Mammary epithelial cell (primary cell): ENCODE measurements at regions of chr3 and their contacts with region 1.

Region 1: GRCh38 chr3:197554562-197555280 is 1.0 kb downstream of the BDH1 start:
- DNase-seq: peak; percentile 95
- H3K4me3 ChIP-seq: peak overlapping the region; percentile 58 to 89 (median 71)
- H3K27ac ChIP-seq: peak overlapping the region; percentile 72
- H3K4me1 ChIP-seq: peaks cover 7% of the 10 kb centered on the region
- H3K27me3 ChIP-seq: no peaks in the 10 kb centered on the region
- CTCF ChIP-seq: peak; percentile 33 to 67

Region 2: GRCh38 chr3:197511130-197511529 is 43.6 kb before region 1 on chr3:
- CTCF ChIA-PET with region 1: no interaction called
- dilution Hi-C with region 1: loop called (anchors 5 kb)
- in situ Hi-C with region 1: no loop called
- intact Hi-C with region 1: loop called (anchors 2 kb)
- DNase-seq: peak; percentile 59
- H3K4me3 ChIP-seq: no peak overlapping the region
- H3K27ac ChIP-seq: no peak overlapping the region
- H3K4me1 ChIP-seq: peaks cover 30% of the 10 kb centered on the region
- H3K27me3 ChIP-seq: no peaks in the 10 kb centered on the region
- CTCF ChIP-seq: no peak

Region 3: GRCh38 chr3:197516517-197516889 is 38.2 kb before region 1 on chr3:
- CTCF ChIA-PET with region 1: no interaction called
- dilution Hi-C with region 1: loop called (anchors 5 kb)
- in situ Hi-C with region 1: no loop called
- intact Hi-C with region 1: loop called (anchors 2 kb)
- DNase-seq: peak; percentile 98
- H3K4me3 ChIP-seq: no peak overlapping the region
- H3K27ac ChIP-seq: peak overlapping the region; percentile 65
- H3K4me1 ChIP-seq: peaks cover 32% of the 10 kb centered on the region
- H3K27me3 ChIP-seq: no peaks in the 10 kb centered on the region
- CTCF ChIP-seq: no peak

Region 4: DNA sequence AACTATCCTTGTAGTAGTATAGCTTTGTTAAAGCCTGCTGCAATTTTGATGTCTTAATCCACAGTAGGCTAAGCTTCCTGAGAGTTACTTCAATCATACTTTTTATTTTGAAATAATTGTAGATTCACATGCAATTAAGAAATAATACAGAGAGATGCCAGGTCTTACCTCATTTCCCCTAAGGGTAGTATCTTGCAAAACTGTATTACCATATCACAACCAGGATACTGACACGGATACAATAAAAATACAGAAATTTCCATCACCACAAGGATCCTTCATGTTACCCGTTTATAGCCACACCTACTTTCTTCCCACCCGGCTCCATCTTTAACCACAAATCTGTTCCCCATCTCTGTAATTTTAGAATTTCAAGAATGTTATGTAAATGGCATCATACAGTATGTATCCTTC is 20.8 kb before region 1 on chr3:
- CTCF ChIA-PET with region 1: interaction called, 10 read pairs
- dilution Hi-C with region 1: no loop called
- in situ Hi-C with region 1: no loop called
- intact Hi-C with region 1: loop called (anchors 2 kb)
- DNase-seq: peak; percentile 69
- H3K4me3 ChIP-seq: no peak overlapping the region
- H3K27ac ChIP-seq: peak overlapping the region; percentile 46
- H3K4me1 ChIP-seq: peaks cover 20% of the 10 kb centered on the region
- H3K27me3 ChIP-seq: no peaks in the 10 kb centered on the region
- CTCF ChIP-seq: no peak

Region 5: DNA sequence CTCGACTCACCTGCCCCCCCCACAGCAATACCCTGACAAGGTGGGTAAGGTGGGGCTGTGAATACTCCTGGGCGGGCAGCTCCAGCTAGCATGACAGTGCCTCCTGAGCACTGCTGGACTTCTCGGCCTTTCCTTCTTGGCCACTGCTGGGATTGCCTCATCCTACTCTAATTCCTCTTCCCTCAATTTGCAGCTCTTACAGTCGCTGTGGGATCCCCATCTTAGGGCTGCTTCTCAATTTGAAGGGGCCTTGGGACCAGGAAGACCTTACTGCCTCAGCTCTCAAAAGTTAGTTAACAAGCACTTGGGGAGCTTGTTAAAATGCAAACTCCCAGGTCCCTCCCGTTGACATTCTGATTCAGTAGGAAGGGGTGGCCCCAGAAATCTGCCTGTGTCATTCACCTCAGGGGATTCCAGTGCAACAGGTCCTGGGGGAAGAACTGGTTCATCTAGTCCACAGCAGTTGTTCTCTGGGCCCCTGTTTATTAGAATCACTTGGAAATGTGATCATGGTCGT is 13.8 kb before region 1 on chr3:
- CTCF ChIA-PET with region 1: interaction called, 10 read pairs
- dilution Hi-C with region 1: no loop called
- in situ Hi-C with region 1: no loop called
- intact Hi-C with region 1: no loop called
- DNase-seq: peak; percentile 38
- H3K4me3 ChIP-seq: no peak overlapping the region
- H3K27ac ChIP-seq: no peak overlapping the region
- H3K4me1 ChIP-seq: peaks cover 12% of the 10 kb centered on the region
- H3K27me3 ChIP-seq: no peaks in the 10 kb centered on the region
- CTCF ChIP-seq: no peak

Region 6: DNA sequence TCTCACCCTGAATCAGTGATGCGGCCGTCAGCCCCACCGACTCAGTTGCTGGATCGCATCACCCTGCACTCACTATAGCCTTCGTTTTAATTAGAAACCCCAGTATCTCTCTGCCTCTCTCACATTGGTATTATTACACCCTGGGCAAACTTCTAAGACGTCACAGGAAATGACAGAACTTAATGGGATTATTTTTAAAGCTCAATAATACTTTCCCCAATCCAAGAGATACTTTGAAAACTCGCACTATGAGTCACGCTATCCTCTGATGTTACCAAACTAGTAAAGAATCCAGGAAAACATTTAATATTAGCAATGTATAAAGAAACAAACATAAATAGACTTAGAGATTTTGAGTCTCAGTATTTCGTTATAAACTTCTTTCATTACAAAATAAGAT is 145.4 kb after region 1 on chr3:
- CTCF ChIA-PET with region 1: no interaction called
- dilution Hi-C with region 1: no loop called
- in situ Hi-C with region 1: no loop called
- intact Hi-C with region 1: no loop called
- DNase-seq: no peak
- H3K4me3 ChIP-seq: no peak overlapping the region
- H3K27ac ChIP-seq: no peak overlapping the region
- H3K4me1 ChIP-seq: no peaks in the 10 kb centered on the region
- H3K27me3 ChIP-seq: no peaks in the 10 kb centered on the region
- CTCF ChIP-seq: no peak

Region 7: DNA sequence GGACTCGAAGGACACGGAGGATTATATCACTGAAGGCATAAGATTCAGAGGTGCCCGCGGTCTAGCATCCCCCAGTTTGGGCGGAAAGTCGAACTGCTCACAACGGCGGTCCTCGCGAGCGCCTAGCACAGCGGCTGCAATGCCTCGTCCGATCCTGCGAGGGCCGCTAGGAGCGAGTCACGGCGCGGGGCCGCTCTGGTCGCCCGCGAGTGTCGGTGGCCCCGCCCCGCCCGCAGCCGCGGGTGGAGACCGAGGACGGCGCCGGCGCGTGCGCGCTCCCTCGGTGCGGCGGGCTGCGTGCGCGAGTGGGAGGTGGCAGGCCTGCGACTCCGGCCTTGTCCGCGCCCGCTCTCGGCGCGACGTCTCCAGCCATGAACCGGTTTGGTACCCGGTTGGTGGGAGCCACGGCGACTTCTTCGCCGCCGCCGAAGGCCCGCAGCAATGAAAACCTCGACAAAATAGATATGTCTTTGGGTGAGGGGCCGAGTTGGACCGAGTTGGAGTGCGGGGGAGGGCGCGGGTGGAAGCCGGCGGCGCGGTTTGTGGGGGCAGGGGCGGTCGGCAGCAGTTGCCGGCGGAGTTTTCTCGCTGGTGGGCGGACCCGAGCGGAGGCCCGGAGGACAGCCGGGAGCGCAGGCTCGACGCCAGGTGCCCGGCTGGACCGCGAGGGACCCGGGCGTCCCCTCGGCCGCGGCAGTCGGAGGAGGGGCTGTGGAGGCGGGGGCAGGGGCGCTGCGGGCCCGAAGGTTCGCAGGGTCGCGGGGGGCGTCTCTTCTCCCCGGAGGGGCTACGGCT is 195.1 kb after region 1 on chr3 and contains the start of gene FYTTD1:
- CTCF ChIA-PET with region 1: no interaction called
- dilution Hi-C with region 1: no loop called
- in situ Hi-C with region 1: no loop called
- intact Hi-C with region 1: loop called (anchors 10 kb)
- DNase-seq: peak; percentile 80
- H3K4me3 ChIP-seq: peak within 1 kb of the TSS; percentile 61 to 87 (median 81)
- H3K27ac ChIP-seq: peak within 1 kb of the TSS; percentile 66
- H3K4me1 ChIP-seq: peaks cover 20% of the 10 kb centered on the region
- H3K27me3 ChIP-seq: no peaks in the 10 kb centered on the region
- CTCF ChIP-seq: peak; percentile 18 to 42
- total RNA-seq, gene FYTTD1: 49.0 to 59.6 TPM